Activated B cell treated with CpG ODN at 0.5 μM for 24 hours (primary cell): ENCODE measurements at regions of chr9 and their contacts with region 1.

Region 1: GRCh38 chr9:113657703-113658544 is 194.4 kb downstream of the RGS3 start:
- DNase-seq: peak; percentile 74
- ATAC-seq: peak; percentile 97
- H3K4me3 Mint-ChIP-seq: no peak overlapping the region
- H3K27ac Mint-ChIP-seq: no peak overlapping the region
- H3K4me1 Mint-ChIP-seq: no peaks in the 10 kb centered on the region
- H3K27me3 Mint-ChIP-seq: peaks cover 16% of the 10 kb centered on the region
- CTCF ChIP-seq: peak; percentile 84

Region 2: GRCh38 chr9:112925058-112925641 is 732.8 kb before region 1 on chr9:
- CTCF ChIA-PET with region 1: no interaction called
- POLR2A ChIA-PET with region 1: no interaction called
- intact Hi-C with region 1: loop called (anchors 5 kb)
- DNase-seq: no peak
- ATAC-seq: no peak
- H3K4me3 Mint-ChIP-seq: no peak overlapping the region
- H3K27ac Mint-ChIP-seq: no peak overlapping the region
- H3K4me1 Mint-ChIP-seq: peaks cover 2% of the 10 kb centered on the region
- H3K27me3 Mint-ChIP-seq: peaks cover 26% of the 10 kb centered on the region
- CTCF ChIP-seq: no peak

Region 3: GRCh38 chr9:113401027-113401792 is 256.7 kb before region 1 on chr9 and contains the start of gene ALAD:
- CTCF ChIA-PET with region 1: interaction called, 19 read pairs
- POLR2A ChIA-PET with region 1: interaction called, 6 read pairs
- intact Hi-C with region 1: loop called (anchors 1 kb)
- DNase-seq: peak; percentile 99
- ATAC-seq: peak; percentile 99
- H3K4me3 Mint-ChIP-seq: peak within 1 kb of the TSS; percentile 96
- H3K27ac Mint-ChIP-seq: peak within 1 kb of the TSS; percentile 87
- H3K4me1 Mint-ChIP-seq: peaks cover 17% of the 10 kb centered on the region
- H3K27me3 Mint-ChIP-seq: no peaks in the 10 kb centered on the region
- CTCF ChIP-seq: no peak
- total RNA-seq, gene ALAD: 24.0 and 24.3 TPM in 2 replicates

Region 4: GRCh38 chr9:113591001-113591898 is 66.7 kb before region 1 on chr9:
- CTCF ChIA-PET with region 1: interaction called, 321 read pairs
- POLR2A ChIA-PET with region 1: interaction called, 5 read pairs
- intact Hi-C with region 1: loop called (anchors 1 kb)
- DNase-seq: peak; percentile 67
- ATAC-seq: peak; percentile 71
- H3K4me3 Mint-ChIP-seq: no peak overlapping the region
- H3K27ac Mint-ChIP-seq: no peak overlapping the region
- H3K4me1 Mint-ChIP-seq: peaks cover 14% of the 10 kb centered on the region
- H3K27me3 Mint-ChIP-seq: no peaks in the 10 kb centered on the region
- CTCF ChIP-seq: no peak

Region 5: DNA sequence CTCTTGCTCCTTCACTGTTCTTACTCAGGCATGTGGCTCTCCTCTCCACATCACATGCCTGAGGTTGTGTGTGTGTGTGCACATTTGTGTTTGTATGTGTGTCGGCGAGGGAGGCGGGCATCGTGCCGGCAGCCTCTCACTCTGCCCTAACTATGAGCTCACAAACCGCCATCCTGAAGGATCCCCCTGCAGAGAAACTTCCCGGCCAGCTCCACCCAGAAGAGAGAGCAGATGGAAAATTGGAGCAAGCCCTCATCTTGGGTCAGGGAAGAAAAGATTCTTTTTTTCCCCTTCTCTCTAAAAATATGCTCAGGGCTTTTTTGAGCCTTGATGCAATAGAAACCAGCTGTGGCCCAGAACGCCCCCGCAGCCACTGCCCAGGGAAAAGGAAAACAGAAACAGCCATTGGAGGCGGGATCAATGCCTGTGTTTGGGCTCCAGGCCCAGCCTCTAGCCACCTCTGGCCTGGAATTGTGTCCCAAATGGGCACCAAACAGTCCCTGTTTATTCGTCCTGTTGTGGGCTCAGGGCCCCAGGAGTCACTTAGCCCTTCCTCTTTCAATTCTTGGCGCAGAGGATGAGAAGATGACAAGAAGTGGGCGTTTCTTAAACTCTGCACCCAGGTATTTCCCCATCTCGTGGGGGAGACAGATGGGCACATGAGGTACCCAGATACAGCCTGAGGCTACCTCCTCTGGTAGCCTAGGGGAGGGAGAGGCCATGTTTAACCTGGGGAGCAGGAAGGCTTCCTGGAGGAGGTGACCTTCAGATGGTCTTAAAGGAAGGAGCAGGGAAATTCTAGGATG is 42.9 kb before region 1 on chr9:
- CTCF ChIA-PET with region 1: interaction called, 17 read pairs
- POLR2A ChIA-PET with region 1: no interaction called
- intact Hi-C with region 1: loop called (anchors 5 kb)
- DNase-seq: no peak
- ATAC-seq: peak; percentile 59
- H3K4me3 Mint-ChIP-seq: no peak overlapping the region
- H3K27ac Mint-ChIP-seq: peak overlapping the region; percentile 13
- H3K4me1 Mint-ChIP-seq: peaks cover 51% of the 10 kb centered on the region
- H3K27me3 Mint-ChIP-seq: no peaks in the 10 kb centered on the region
- CTCF ChIP-seq: no peak

Region 6: DNA sequence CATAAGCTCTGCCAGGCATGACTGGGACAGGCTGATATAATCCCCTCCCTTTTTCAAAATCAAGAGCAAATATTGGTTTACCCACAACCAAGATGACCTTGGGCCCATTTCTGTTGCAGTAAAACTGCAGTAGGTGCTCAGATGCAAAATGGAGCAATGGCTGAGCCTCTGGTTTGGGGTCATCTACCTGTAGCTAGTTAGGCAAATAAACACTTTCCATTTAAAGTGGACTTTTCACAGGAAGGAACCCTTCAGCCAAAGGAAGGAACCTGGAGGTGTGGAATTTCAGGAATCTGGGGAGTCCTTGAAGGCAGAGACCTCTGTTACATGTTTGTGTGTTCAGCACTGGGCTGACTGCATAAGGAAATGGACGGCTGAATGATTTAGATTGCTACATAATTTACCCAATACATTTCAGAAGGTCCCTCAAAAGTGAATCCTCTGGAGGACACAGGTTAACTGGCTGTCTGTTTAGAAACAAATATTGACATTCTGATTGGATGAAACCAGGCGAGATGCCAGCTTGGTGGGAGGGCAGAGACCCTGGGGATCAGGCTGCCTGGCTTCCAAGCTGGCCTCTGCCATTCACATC is 48.1 kb after region 1 on chr9:
- CTCF ChIA-PET with region 1: no interaction called
- POLR2A ChIA-PET with region 1: no interaction called
- intact Hi-C with region 1: no loop called
- DNase-seq: no peak
- ATAC-seq: no peak
- H3K4me3 Mint-ChIP-seq: no peak overlapping the region
- H3K27ac Mint-ChIP-seq: no peak overlapping the region
- H3K4me1 Mint-ChIP-seq: no peaks in the 10 kb centered on the region
- H3K27me3 Mint-ChIP-seq: peaks cover 12% of the 10 kb centered on the region
- CTCF ChIP-seq: no peak